ENCODE measurements at regions of chr20 and their contacts with region 1.

Region 1: DNA sequence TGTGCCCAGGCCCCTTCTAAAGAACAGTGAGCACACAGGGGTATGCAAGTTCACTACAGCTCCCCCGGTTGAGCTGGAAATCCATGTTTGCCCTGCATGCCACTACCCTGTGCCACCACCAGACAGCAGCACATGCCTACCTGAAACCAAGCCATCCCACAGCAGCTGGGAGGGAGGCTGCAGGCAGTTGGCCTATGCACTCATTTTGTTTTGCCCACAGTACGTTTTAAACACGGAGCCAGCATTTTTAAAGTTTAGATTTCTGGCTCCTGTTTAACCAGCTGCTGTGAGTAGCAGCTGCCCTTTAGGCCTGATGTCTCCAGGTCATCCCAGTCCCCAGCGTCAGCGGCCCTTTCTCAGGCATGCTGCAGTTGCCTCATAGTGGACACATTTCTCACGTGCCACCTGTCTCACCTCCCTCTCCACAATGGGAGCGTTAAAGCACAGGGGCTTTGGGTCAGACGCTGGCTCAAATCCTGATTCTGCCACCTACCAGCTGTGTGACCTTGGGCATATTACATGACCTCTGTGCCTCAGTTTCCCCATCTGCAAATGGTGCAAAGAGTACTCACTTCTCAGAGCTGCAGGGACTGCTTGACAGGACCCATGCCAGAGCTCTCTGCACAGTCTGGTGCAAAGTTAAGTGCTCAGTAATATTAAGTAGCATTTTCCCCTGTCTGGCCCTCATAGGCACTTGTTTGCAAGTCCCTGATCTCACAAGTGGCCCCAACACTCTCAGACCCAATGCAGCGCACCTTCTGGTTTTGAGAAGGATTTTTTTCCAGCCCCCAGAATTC is 8.1 kb upstream of the UBE2V1 start:
- DNase-seq: peak; percentile 84
- H3K4me3 Mint-ChIP-seq: no peak overlapping the region
- H3K27ac Mint-ChIP-seq: peak overlapping the region; percentile 39
- H3K4me1 Mint-ChIP-seq: peaks cover 12% of the 10 kb centered on the region
- H3K27me3 Mint-ChIP-seq: no peaks in the 10 kb centered on the region
- CTCF ChIP-seq: peak; percentile 98

Region 2: GRCh38 chr20:49948809-49949548 is 172.1 kb before region 1 on chr20:
- CTCF ChIA-PET with region 1: no interaction called
- intact Hi-C with region 1: no loop called
- DNase-seq: no peak
- H3K4me3 Mint-ChIP-seq: no peak overlapping the region
- H3K27ac Mint-ChIP-seq: no peak overlapping the region
- H3K4me1 Mint-ChIP-seq: peaks cover 17% of the 10 kb centered on the region
- H3K27me3 Mint-ChIP-seq: no peaks in the 10 kb centered on the region
- CTCF ChIP-seq: no peak

Region 3: GRCh38 chr20:50085452-50086365 is 35.4 kb before region 1 on chr20:
- CTCF ChIA-PET with region 1: no interaction called
- intact Hi-C with region 1: no loop called
- DNase-seq: peak; percentile 52
- H3K4me3 Mint-ChIP-seq: peak overlapping the region; percentile 8
- H3K27ac Mint-ChIP-seq: peak overlapping the region; percentile 16
- H3K4me1 Mint-ChIP-seq: peaks cover 16% of the 10 kb centered on the region
- H3K27me3 Mint-ChIP-seq: no peaks in the 10 kb centered on the region
- CTCF ChIP-seq: peak; percentile 85

Region 4: GRCh38 chr20:50138479-50139393 is 17.6 kb after region 1 on chr20:
- CTCF ChIA-PET with region 1: interaction called, 24 read pairs
- intact Hi-C with region 1: loop called (anchors 1 kb)
- DNase-seq: peak; percentile 96
- H3K4me3 Mint-ChIP-seq: peak overlapping the region; percentile 36
- H3K27ac Mint-ChIP-seq: peak overlapping the region; percentile 61
- H3K4me1 Mint-ChIP-seq: peaks cover 54% of the 10 kb centered on the region
- H3K27me3 Mint-ChIP-seq: no peaks in the 10 kb centered on the region
- CTCF ChIP-seq: peak; percentile 69

Region 5: GRCh38 chr20:50179507-50180016 is 58.5 kb after region 1 on chr20:
- CTCF ChIA-PET with region 1: interaction called, 48 read pairs
- intact Hi-C with region 1: loop called (anchors 2 kb)
- DNase-seq: no peak
- H3K4me3 Mint-ChIP-seq: no peak overlapping the region
- H3K27ac Mint-ChIP-seq: peak overlapping the region; percentile 22
- H3K4me1 Mint-ChIP-seq: peaks cover 9% of the 10 kb centered on the region
- H3K27me3 Mint-ChIP-seq: no peaks in the 10 kb centered on the region
- CTCF ChIP-seq: peak; percentile 62

Measured in Calu3 (cell line).